Gastrocnemius medialis (tissue), 4 donors: ENCODE measurements at regions of chr5 and their contacts with region 1.

Region 1: GRCh38 chr5:178626484-178627258 is at the start of gene CLK4:
- DNase-seq: peak; percentile 92 to 94
- ATAC-seq: peak; percentile 86 to 87
- H3K4me3 ChIP-seq: peak within 1 kb of the TSS; percentile 75 to 98 (median 80)
- H3K27ac ChIP-seq: peak within 1 kb of the TSS; percentile 91 to 100 (median 96)
- H3K4me1 ChIP-seq: peaks cover 34 to 41% of the 10 kb centered on the region in 2 donors
- H3K27me3 ChIP-seq: no peaks in the 10 kb centered on the region
- CTCF ChIP-seq: peak in 1 of 5 experiments; percentile 5
- POLR2A ChIP-seq: peak; percentile 73 to 84
- total RNA-seq, gene CLK4: 11.4 to 36.7 (median 14.3) TPM

Region 2: GRCh38 chr5:178232124-178232919 is 394.3 kb before region 1 on chr5 and contains the start of gene PHYKPL:
- in situ Hi-C with region 1: no loop called
- intact Hi-C with region 1: loop called (anchors 2 kb)
- DNase-seq: peak; percentile 39 to 76
- ATAC-seq: peak; percentile 42 to 55
- H3K4me3 ChIP-seq: peak within 1 kb of the TSS; percentile 60 to 76 (median 70)
- H3K27ac ChIP-seq: peak within 1 kb of the TSS; percentile 87 to 99 (median 94)
- H3K4me1 ChIP-seq: peaks cover 53 to 58% of the 10 kb centered on the region in 2 donors
- H3K27me3 ChIP-seq: no peaks in the 10 kb centered on the region
- CTCF ChIP-seq: peak in 1 of 5 experiments; percentile 6
- POLR2A ChIP-seq: peak; percentile 79 to 80
- total RNA-seq, gene PHYKPL: 25.0 to 54.6 (median 33.7) TPM

Region 3: GRCh38 chr5:178564397-178564796 is 62.3 kb before region 1 on chr5:
- in situ Hi-C with region 1: no loop called
- intact Hi-C with region 1: no loop called
- DNase-seq: no peak
- ATAC-seq: peak in 1 of 2 donors; percentile 26
- H3K4me3 ChIP-seq: no peak overlapping the region
- H3K27ac ChIP-seq: no peak overlapping the region
- H3K4me1 ChIP-seq: no peaks in the 10 kb centered on the region
- H3K27me3 ChIP-seq: no peaks in the 10 kb centered on the region
- CTCF ChIP-seq: no peak
- POLR2A ChIP-seq: no peak

Region 4: GRCh38 chr5:178732281-178732680 is 105.6 kb after region 1 on chr5:
- in situ Hi-C with region 1: no loop called
- intact Hi-C with region 1: loop called (anchors 2 kb)
- DNase-seq: no peak
- ATAC-seq: no peak
- H3K4me3 ChIP-seq: no peak overlapping the region
- H3K27ac ChIP-seq: no peak overlapping the region
- H3K4me1 ChIP-seq: peaks cover 0 to 4% of the 10 kb centered on the region in 2 donors
- H3K27me3 ChIP-seq: no peaks in the 10 kb centered on the region
- CTCF ChIP-seq: no peak
- POLR2A ChIP-seq: no peak

Region 5: DNA sequence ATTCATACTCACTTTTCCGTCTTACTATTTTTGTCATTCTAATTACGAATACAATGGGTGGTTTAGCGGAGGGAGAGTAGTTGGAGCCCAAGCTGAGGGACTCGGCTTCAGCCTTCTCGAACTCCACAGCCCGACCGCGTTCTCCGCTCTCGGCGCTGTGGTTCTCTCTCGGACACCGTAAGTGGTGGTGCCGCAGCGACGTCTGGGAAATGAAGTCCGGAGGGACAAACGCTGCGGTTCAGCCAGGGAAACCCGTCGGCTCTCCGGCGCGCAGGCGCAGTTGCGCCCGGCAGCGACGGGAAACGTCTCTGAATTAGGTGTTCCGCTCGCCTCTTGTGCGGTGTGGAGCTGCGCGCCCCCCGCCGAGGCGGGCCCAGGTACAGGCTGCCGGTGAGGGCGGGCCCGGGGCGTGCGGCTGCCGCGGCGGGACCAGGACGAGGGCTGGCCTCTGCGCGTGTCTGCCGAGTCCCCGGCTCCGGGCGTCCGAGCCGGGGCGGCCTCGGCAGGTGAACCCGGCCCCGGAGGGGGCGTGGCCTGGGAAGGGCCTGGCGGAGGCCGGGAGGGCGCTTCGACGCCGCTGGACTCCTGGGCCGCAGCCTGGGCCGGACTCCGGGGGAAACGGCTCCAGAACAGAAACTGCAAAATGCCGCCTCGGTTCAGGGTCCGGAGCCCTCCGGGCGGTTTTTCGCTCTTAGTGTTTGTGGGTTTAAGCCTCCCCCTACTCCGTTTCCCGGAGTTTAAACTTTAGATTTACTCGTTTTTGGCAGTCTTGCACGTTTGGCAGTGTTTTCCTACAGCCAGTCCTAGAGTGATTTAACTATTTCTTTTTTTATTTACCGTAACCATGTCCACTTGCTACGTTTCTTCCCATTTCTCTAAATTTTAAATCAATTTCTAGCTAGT is 397.1 kb after region 1 on chr5 and contains the start of gene ZNF879:
- in situ Hi-C with region 1: no loop called
- intact Hi-C with region 1: loop called (anchors 1 kb)
- DNase-seq: peak; percentile 89 to 92
- ATAC-seq: peak; percentile 98 to 99
- H3K4me3 ChIP-seq: peak within 1 kb of the TSS; percentile 58 to 82 (median 68)
- H3K27ac ChIP-seq: peak within 1 kb of the TSS; percentile 74 to 89 (median 82)
- H3K4me1 ChIP-seq: peaks cover 7 to 9% of the 10 kb centered on the region in 2 donors
- H3K27me3 ChIP-seq: no peaks in the 10 kb centered on the region
- CTCF ChIP-seq: peak in 2 of 5 experiments; percentile 11 to 14
- POLR2A ChIP-seq: peak; percentile 46 to 60
- total RNA-seq, gene ZNF879: 2.5 to 7.0 (median 3.7) TPM

Region 6: DNA sequence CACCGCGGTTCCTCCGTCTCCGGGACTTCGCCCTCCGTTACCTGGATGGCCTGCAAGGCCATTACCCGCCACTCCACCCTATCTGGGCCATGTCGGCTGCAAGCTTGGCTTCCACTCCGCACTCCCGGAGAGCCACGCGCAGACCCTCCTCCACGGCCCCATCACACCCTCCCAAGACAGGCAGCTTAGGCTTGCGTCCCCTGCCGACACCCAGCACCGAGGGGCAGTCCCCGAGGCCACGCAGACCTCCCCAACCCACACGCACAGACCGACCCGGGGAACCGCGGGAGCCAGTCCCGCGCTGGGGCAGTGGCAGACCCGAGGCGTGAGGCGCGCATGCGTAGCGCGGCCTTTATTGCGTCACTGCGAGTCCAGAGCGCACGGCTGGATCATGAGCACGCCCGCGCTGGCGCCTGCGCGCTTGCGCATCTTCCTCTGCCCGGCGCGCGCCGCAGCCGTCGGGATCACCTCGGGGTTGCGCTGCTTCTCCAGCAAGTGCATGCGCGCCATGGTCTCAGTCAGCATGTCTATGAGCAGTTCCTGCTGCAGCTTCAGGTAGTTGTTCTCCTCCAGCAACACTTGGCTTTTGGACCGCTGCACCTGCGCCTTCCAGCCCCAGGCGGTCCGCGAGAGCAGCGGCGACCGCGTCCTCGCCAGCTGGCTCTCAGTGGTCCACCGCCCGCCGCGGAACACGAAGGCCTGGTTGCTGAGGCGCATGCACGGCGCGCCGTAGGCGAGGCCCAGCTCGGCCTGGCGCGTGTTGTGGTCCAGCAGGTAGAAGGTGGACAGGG is 1051.7 kb after region 1 on chr5:
- in situ Hi-C with region 1: no loop called
- intact Hi-C with region 1: no loop called
- DNase-seq: peak; percentile 89 to 94
- ATAC-seq: peak; percentile 96 to 97
- H3K4me3 ChIP-seq: peak overlapping the region; percentile 77 to 100 (median 84)
- H3K27ac ChIP-seq: peak overlapping the region; percentile 88 to 99 (median 92)
- H3K4me1 ChIP-seq: peaks cover 9 to 12% of the 10 kb centered on the region in 2 donors
- H3K27me3 ChIP-seq: no peaks in the 10 kb centered on the region
- CTCF ChIP-seq: peak in 2 of 5 experiments; percentile 21 to 25
- POLR2A ChIP-seq: peak; percentile 76 to 77

Region 7: DNA sequence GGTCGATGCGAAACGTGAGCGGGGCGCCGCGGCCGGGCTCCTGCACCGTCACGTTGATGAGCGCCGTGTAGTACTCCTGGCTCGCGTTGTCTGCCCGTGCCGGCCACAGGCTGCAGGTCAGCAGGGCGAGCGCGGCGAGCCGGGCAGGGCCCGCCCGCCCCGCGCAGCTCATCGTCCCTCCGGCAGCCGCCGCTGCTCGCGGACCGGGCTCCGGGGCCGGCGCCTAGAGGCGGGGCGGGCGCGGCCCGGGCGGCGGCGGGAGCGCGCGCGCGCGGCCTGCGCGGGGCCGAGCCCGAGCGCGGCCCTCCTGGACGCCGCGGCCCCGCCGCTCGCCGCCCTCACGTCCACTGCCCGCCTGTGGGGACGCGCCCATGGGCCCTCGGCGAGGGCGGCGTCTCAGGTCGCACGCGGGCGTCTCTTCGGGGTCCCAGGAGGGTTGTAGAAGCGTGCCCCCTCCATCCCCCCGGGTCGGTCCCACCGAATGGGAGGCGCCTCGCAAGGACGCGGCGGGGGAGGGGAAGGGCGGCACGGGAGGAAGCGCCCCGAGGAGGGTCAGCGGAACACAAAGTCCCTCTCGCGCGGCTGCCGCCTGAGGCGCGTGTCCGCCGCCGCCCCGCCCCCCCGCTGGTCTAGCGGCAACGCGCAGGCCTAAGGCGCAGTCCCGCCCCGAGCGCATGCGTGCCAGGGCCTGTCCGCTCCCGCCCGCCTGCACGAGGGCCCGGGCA is 1445.0 kb after region 1 on chr5 and contains the start of gene RNF130:
- in situ Hi-C with region 1: no loop called
- intact Hi-C with region 1: loop called (anchors 10 kb)
- DNase-seq: peak; percentile 89 to 92
- ATAC-seq: peak; percentile 85 to 87
- H3K4me3 ChIP-seq: peak within 1 kb of the TSS; percentile 75 to 98 (median 84)
- H3K27ac ChIP-seq: peak within 1 kb of the TSS; percentile 91 to 98 (median 98)
- H3K4me1 ChIP-seq: peaks cover 9 to 32% of the 10 kb centered on the region in 2 donors
- H3K27me3 ChIP-seq: no peaks in the 10 kb centered on the region
- CTCF ChIP-seq: no peak
- POLR2A ChIP-seq: peak; percentile 58 to 67
- total RNA-seq, gene RNF130: 34.5 to 79.5 (median 55.6) TPM